Activated naive CD4-positive, alpha-beta T cell treated with anti-CD3 and anti-CD28 coated beads, Interleukin-2, amount 10 ng/mL, durations not matched to agents 7 days and 5 days (primary cell): ENCODE measurements at regions of chr5 and their contacts with region 1.

Region 1: GRCh38 chr5:133868946-133869518 is 99.4 kb downstream of the C5orf15 start:
- DNase-seq: peak; percentile 87
- H3K4me3 Mint-ChIP-seq: no peak overlapping the region
- H3K27ac Mint-ChIP-seq: no peak overlapping the region
- H3K4me1 Mint-ChIP-seq: peaks cover 9% of the 10 kb centered on the region
- H3K27me3 Mint-ChIP-seq: peaks cover 8% of the 10 kb centered on the region

Region 2: DNA sequence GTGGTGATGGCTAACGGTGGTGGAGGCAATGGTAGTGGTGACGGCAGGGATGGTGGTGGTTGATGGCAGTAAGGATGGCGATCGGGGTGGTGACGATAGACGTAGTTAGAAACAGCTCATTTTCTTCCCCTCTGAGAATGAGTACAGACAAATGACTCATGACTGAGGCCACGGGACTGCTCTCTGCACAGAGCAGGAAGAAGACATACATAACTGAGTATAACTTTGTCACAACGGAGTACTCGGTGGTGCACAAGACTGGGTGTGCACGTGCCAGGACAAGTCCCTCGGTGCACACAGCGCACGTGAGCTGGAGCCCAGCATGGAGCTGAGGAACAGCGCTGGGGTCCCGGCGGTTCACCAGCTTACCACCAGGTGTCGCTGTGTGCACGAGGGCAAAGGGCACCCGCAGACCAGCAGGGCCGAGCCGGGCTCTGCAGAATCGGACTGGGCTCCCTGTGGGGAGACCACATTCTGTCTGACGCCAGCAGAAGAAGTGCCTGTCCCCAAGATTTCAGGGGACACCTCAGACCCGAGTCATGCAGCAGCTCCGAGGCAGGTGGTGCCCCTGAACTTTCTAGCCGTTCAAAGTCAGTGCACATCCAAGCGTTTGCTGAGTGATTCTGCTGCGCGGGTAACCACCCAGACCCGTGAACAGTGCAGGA is 445.3 kb before region 1 on chr5:
- CTCF ChIA-PET with region 1: interaction called, 11 read pairs
- DNase-seq: peak; percentile 72
- H3K4me3 Mint-ChIP-seq: no peak overlapping the region
- H3K27ac Mint-ChIP-seq: no peak overlapping the region
- H3K4me1 Mint-ChIP-seq: peaks cover 4% of the 10 kb centered on the region
- H3K27me3 Mint-ChIP-seq: peaks cover 21% of the 10 kb centered on the region

Region 3: DNA sequence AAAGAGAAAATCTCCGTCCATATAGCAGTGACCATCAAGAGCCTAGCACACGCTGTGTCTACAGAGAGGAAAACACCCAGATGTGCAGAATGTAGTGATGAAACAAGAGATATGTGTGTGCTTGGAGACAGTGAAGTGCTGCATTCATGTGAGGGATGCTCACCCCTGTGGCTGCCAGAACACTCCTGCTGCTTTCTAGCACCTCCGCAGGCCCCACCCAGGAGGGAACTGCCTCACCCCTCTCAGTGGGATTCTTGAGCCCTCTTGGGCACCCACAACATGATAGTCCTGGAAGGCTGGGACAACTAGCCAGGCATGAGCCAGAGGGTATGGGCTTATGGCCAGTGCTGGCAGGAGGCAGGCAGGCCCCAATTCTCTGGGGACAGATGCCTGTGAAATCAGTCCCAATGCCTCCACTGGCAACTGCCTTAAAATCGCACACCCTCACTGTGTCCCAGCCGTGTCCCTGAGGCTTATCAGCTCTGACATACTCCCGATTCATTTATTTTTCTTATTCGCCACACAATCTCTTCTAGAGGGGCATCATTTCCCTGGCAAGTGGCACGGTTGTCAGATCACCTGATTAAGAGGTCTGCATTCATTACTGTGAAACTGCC is 183.5 kb before region 1 on chr5:
- CTCF ChIA-PET with region 1: no interaction called
- DNase-seq: no peak
- H3K4me3 Mint-ChIP-seq: no peak overlapping the region
- H3K27ac Mint-ChIP-seq: no peak overlapping the region
- H3K4me1 Mint-ChIP-seq: no peaks in the 10 kb centered on the region
- H3K27me3 Mint-ChIP-seq: peaks cover 29% of the 10 kb centered on the region

Region 4: GRCh38 chr5:133754575-133755169 is 114.4 kb before region 1 on chr5:
- CTCF ChIA-PET with region 1: interaction called, 19 read pairs
- DNase-seq: peak; percentile 52
- H3K4me3 Mint-ChIP-seq: no peak overlapping the region
- H3K27ac Mint-ChIP-seq: no peak overlapping the region
- H3K4me1 Mint-ChIP-seq: no peaks in the 10 kb centered on the region
- H3K27me3 Mint-ChIP-seq: peaks cover 28% of the 10 kb centered on the region

Region 5: DNA sequence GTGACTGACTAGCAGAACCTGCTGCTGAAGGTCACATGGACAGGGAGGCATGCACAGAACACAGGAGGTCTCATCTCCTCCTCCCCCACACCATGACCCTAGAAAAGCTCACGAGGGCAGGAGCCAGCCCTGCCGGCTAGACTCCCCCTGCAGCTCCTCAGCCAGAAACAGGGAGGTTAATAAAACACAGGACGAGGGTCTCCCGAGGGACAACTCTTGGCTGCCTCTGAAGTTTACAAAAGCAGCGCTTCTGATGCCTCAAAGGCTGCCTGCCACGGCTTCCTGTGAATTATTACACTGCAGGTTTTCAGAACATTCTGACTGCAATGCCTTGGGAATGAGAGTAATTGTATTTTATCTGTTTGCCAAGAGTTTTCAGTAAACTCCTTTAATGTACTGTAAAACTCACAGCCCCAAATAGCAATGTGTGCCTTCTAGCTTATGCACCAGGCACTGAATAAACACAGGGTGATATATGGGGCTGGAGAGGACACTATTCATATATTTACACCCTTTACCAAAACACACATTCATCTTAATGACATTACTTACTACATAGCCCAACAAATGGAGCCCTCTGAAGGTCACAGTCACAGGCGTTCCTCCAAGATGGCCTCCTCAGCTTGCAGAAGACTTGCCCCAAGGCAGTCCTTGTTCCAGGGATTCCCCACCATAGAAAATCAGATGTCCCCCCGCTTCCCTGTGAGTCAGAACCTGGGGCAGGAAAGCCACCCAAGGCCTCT is 15.7 kb after region 1 on chr5:
- CTCF ChIA-PET with region 1: interaction called, 14 read pairs
- DNase-seq: no peak
- H3K4me3 Mint-ChIP-seq: no peak overlapping the region
- H3K27ac Mint-ChIP-seq: no peak overlapping the region
- H3K4me1 Mint-ChIP-seq: no peaks in the 10 kb centered on the region
- H3K27me3 Mint-ChIP-seq: peaks cover 20% of the 10 kb centered on the region